CD4-positive, alpha-beta T cell (primary cell): ENCODE measurements at regions of chr9 and their contacts with region 1.

Region 1: GRCh38 chr9:125558453-125559092 is 148.4 kb downstream of the MAPKAP1 start:
- DNase-seq: peak in 13 of 14 experiments; percentile 10 to 76 (median 30)
- ATAC-seq: peak; percentile 70
- H3K4me3 ChIP-seq: no peak overlapping the region
- H3K4me3 Mint-ChIP-seq: no peak overlapping the region
- H3K27ac ChIP-seq: no peak overlapping the region
- H3K27ac Mint-ChIP-seq: no peak overlapping the region
- H3K4me1 ChIP-seq: no peaks in the 10 kb centered on the region
- H3K4me1 Mint-ChIP-seq: peaks cover 11% of the 10 kb centered on the region
- H3K27me3 ChIP-seq: no peaks in the 10 kb centered on the region
- H3K27me3 Mint-ChIP-seq: no peaks in the 10 kb centered on the region
- CTCF ChIP-seq: peak; percentile 68

Region 2: DNA sequence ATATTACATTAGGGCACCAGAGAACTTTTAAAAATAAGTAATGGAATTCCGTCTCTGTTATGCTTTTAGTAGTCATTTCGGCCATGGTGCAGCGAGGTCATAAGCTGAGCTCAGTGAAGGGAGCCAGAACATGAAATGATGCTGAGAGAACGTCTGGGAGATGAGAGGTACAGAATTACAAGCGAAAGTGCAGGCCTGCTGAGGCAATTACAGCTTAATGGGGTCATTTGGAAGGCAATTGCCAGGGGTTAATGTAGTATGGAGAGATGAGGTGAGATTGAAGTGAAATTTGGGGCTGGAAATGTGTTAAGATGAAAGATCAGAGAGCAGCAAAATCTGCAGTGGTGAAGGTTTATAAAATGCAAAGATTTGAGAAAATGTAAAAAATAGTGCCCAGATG is 285.1 kb after region 1 on chr9:
- CTCF ChIA-PET with region 1: no interaction called
- POLR2A ChIA-PET with region 1: no interaction called
- intact Hi-C with region 1: loop called in 1 of 2 experiments (anchors 10 kb)
- DNase-seq: no peak
- ATAC-seq: no peak
- H3K4me3 ChIP-seq: no peak overlapping the region
- H3K4me3 Mint-ChIP-seq: no peak overlapping the region
- H3K27ac ChIP-seq: no peak overlapping the region
- H3K27ac Mint-ChIP-seq: no peak overlapping the region
- H3K4me1 ChIP-seq: no peaks in the 10 kb centered on the region
- H3K4me1 Mint-ChIP-seq: peaks cover 16% of the 10 kb centered on the region
- H3K27me3 ChIP-seq: no peaks in the 10 kb centered on the region
- H3K27me3 Mint-ChIP-seq: no peaks in the 10 kb centered on the region
- CTCF ChIP-seq: no peak

Region 3: DNA sequence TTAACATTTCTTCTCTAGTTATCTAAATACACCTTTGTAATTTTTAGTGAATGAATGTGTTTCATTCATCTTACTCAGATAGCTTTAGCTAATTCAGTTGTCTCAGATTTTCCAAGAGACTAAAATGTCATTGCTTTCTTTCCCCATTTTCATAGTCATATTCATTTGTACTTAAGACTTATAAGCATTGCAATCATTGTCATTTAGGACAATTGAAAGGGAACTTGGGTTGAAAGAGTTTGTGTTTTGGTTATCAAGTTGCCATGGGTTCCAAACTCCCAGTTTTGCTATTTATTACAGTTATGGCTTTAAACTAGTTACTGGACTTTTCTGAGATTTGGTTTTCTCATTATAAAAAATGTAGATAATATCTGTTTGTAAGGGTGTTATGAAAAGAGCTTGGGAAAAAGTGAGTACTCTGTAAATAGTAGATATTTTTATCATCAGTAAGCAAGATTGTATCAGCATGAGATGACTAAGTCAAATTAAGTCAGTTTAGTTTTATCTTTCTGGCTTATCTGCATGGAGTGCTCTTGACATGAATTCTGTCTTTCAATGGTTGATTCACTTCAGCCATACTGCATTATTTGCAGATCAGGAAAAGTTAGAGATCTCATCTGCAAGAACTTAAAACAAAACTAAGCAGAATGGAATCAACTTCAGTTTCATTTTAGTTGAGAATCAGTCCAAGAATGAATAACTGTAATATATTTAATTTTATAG is 296.1 kb after region 1 on chr9:
- CTCF ChIA-PET with region 1: no interaction called
- POLR2A ChIA-PET with region 1: no interaction called
- intact Hi-C with region 1: loop called (anchors 5 to 10 kb)
- DNase-seq: no peak
- ATAC-seq: no peak
- H3K4me3 ChIP-seq: no peak overlapping the region
- H3K4me3 Mint-ChIP-seq: no peak overlapping the region
- H3K27ac ChIP-seq: no peak overlapping the region
- H3K27ac Mint-ChIP-seq: no peak overlapping the region
- H3K4me1 ChIP-seq: no peaks in the 10 kb centered on the region
- H3K4me1 Mint-ChIP-seq: no peaks in the 10 kb centered on the region
- H3K27me3 ChIP-seq: no peaks in the 10 kb centered on the region
- H3K27me3 Mint-ChIP-seq: no peaks in the 10 kb centered on the region
- CTCF ChIP-seq: no peak

Region 4: DNA sequence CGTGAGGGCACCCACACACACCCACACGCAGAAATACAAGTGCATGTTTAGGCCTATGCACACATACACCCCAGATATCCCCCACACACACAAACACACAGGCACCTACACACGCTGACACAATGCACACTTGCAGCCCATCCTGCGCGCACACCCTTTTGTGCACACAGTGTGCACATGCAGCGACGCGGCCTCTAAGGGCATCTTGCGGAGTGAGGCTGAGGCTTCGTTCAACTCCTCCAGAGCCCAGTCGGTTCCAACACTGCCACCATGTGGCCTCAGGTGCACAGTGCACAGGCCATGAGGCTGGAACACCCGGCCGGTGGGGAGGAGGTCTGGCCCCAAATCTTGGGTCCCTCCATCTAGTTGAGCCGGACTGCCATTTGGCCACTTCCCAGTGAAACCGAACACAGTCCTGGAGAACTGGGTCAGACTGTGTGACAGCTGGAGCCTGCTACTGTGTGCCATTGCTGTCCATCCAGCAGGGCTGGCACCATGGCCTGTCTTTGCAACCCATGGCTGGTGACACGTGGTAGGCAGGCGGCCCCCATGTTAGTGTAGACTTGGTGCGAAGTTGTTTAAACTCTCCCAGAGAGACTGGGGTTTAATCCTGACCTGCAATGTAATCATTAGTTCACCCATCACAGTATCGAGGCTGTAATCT is 670.3 kb after region 1 on chr9:
- CTCF ChIA-PET with region 1: interaction called, 3 read pairs
- POLR2A ChIA-PET with region 1: no interaction called
- intact Hi-C with region 1: loop called in 1 of 2 experiments (anchors 2 kb)
- DNase-seq: peak; percentile 41 to 76 (median 58)
- ATAC-seq: peak; percentile 97
- H3K4me3 ChIP-seq: no peak overlapping the region
- H3K4me3 Mint-ChIP-seq: no peak overlapping the region
- H3K27ac ChIP-seq: no peak overlapping the region
- H3K27ac Mint-ChIP-seq: no peak overlapping the region
- H3K4me1 ChIP-seq: peaks cover 5% of the 10 kb centered on the region
- H3K4me1 Mint-ChIP-seq: peaks cover 13% of the 10 kb centered on the region
- H3K27me3 ChIP-seq: peaks cover 7 to 16% of the 10 kb centered on the region in 2 experiments
- H3K27me3 Mint-ChIP-seq: peaks cover 65% of the 10 kb centered on the region
- CTCF ChIP-seq: peak; percentile 91